ENCODE measurements at regions of chr2 and their contacts with region 1.

Region 1: GRCh38 chr2:241271641-241272297 is 43.7 kb downstream of the HDLBP start:
- DNase-seq: peak; percentile 86 to 87
- ATAC-seq: peak; percentile 74 to 85 (median 80)
- H3K4me3 ChIP-seq: peak overlapping the region; percentile 93
- H3K27ac ChIP-seq: peak overlapping the region; percentile 89
- H3K4me1 ChIP-seq: peaks cover 37% of the 10 kb centered on the region
- H3K27me3 ChIP-seq: no peaks in the 10 kb centered on the region
- CTCF ChIP-seq: no peak

Region 2: GRCh38 chr2:239533569-239534316 is 1738.0 kb before region 1 on chr2:
- intact Hi-C with region 1: no loop called
- DNase-seq: peak; percentile 29 to 73
- ATAC-seq: peak; percentile 34 to 87 (median 80)
- H3K4me3 ChIP-seq: no peak overlapping the region
- H3K27ac ChIP-seq: no peak overlapping the region
- H3K4me1 ChIP-seq: peaks cover 16% of the 10 kb centered on the region
- H3K27me3 ChIP-seq: no peaks in the 10 kb centered on the region
- CTCF ChIP-seq: no peak

Region 3: DNA sequence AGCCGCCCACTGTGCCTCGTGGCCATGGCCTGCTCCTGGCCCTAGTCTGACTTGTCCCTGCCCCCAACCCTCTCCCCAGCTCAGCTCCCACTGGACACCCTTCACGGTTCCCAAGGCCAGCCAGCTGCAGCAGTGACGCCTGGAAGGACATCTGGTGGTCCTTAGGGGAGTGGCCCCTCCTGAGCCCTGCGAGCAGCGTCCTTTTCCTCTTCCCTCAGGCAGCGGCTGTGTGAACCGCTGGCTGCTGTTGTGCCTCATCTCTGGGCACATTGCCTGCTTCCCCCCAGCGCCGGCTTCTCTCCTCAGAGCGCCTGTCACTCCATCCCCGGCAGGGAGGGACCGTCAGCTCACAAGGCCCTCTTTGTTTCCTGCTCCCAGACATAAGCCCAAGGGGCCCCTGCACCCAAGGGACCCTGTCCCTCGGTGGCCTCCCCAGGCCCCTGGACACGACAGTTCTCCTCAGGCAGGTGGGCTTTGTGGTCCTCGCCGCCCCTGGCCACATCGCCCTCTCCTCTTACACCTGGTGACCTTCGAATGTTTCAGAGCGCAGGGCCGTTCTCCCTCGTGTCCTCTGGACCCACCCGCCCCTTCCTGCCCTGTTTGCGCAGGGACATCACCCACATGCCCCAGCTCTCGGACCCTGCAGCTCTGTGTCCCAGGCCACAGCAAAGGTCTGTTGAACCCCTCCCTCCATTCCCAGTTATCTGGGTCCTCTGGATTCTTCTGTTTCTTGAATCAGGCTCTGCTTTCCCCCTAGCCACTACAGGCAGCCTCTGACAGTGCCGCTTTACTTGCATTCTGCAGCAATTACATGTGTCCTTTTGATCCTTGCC is 47.5 kb before region 1 on chr2:
- intact Hi-C with region 1: loop called in 1 of 2 experiments (anchors 5 kb)
- DNase-seq: peak; percentile 47 to 71
- ATAC-seq: peak; percentile 28 to 55 (median 46)
- H3K4me3 ChIP-seq: no peak overlapping the region
- H3K27ac ChIP-seq: no peak overlapping the region
- H3K4me1 ChIP-seq: peaks cover 6% of the 10 kb centered on the region
- H3K27me3 ChIP-seq: no peaks in the 10 kb centered on the region
- CTCF ChIP-seq: no peak

Region 4: GRCh38 chr2:241315093-241315878 is 43.5 kb after region 1 on chr2 and contains the start of gene HDLBP:
- intact Hi-C with region 1: loop called (anchors 1 to 5 kb)
- DNase-seq: peak; percentile 100
- ATAC-seq: peak; percentile 89 to 91 (median 90)
- H3K4me3 ChIP-seq: peak within 1 kb of the TSS; percentile 85
- H3K27ac ChIP-seq: peak within 1 kb of the TSS; percentile 98
- H3K4me1 ChIP-seq: peaks cover 77% of the 10 kb centered on the region
- H3K27me3 ChIP-seq: no peaks in the 10 kb centered on the region
- CTCF ChIP-seq: no peak
- total RNA-seq, gene HDLBP: 349 to 526 (median 469) TPM

Region 5: GRCh38 chr2:241355983-241356870 is 84.5 kb after region 1 on chr2 and contains the start of gene FARP2:
- intact Hi-C with region 1: loop called in 1 of 2 experiments (anchors 5 kb)
- DNase-seq: peak; percentile 99 to 100
- ATAC-seq: peak; percentile 90 to 93 (median 92)
- H3K4me3 ChIP-seq: peak within 1 kb of the TSS; percentile 75
- H3K27ac ChIP-seq: peak within 1 kb of the TSS; percentile 90
- H3K4me1 ChIP-seq: peaks cover 15% of the 10 kb centered on the region
- H3K27me3 ChIP-seq: no peaks in the 10 kb centered on the region
- CTCF ChIP-seq: no peak
- total RNA-seq, gene FARP2: 17.4 to 18.4 (median 17.7) TPM

Region 6: GRCh38 chr2:241609859-241610793 is 338.4 kb after region 1 on chr2:
- intact Hi-C with region 1: loop called in 1 of 2 experiments (anchors 10 kb)
- DNase-seq: peak; percentile 87 to 93
- ATAC-seq: peak; percentile 96 to 98 (median 96)
- H3K4me3 ChIP-seq: peak overlapping the region; percentile 78
- H3K27ac ChIP-seq: peak overlapping the region; percentile 77
- H3K4me1 ChIP-seq: peaks cover 24% of the 10 kb centered on the region
- H3K27me3 ChIP-seq: no peaks in the 10 kb centered on the region
- CTCF ChIP-seq: peak; percentile 64